Activated CD4-positive, alpha-beta T cell treated with anti-CD3 and anti-CD28 coated beads for 36 hours (primary cell): ENCODE measurements at regions of chr5 and their contacts with region 1.

Region 1: DNA sequence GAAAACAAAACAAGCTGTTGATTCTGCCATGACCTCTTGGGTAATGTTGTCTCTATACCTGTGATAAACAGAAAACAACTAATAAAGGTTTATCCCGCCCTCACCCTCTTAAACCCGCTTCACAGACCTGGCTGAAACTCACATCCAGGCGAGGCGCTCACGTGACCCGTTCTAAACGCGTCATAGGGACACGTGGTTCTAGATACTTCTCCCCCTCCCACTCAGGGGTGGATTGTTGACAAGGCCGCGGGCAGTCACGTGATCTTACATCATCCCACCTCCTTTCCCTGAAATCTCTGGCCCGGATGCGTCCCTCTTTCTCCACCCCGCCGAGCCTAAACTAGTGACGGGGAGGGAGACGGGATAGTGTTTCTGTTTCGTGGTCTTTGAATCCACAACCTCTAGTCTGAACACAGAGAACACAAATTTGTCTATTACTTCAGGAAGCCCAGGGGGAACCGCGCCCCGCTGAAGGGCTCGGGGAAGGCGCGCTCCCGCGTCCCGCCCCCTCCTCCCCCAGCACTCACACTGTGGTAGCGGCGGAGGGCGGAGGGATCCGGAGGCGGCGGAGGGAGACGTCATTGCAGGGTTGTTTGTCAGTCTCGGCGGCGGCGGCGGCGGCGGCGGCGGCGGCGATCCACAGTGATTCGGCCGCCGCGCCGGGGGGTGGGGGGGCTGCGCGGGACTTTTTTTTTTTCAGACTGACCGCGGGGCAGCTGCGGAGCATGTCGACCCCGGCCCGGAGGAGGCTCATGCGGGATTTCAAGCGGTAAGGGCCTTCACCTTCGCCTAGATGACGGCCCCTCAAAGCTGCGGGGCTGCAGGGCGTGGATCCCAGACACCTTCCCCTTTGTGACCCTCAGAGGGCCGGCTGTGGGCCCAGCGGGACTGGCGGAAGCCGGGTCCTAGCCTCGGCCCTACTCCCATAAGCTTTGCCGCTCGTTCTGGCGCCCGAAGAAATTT is at the start of gene UBE2B:
- DNase-seq: peak; percentile 98
- ATAC-seq: peak; percentile 72
- H3K4me3 Mint-ChIP-seq: peak within 1 kb of the TSS; percentile 99
- H3K27ac Mint-ChIP-seq: peak within 1 kb of the TSS; percentile 99
- H3K4me1 Mint-ChIP-seq: peaks cover 53% of the 10 kb centered on the region
- H3K27me3 Mint-ChIP-seq: no peaks in the 10 kb centered on the region
- total RNA-seq, gene UBE2B: 112 to 115 TPM

Region 2: GRCh38 chr5:133051580-133052332 is 1319.4 kb before region 1 on chr5 and contains the start of gene HSPA4:
- CTCF ChIA-PET with region 1: no interaction called
- POLR2A ChIA-PET with region 1: no interaction called
- intact Hi-C with region 1: loop called in 1 of 2 experiments (anchors 2 kb)
- DNase-seq: peak; percentile 99
- ATAC-seq: peak; percentile 89
- H3K4me3 Mint-ChIP-seq: peak within 1 kb of the TSS; percentile 98
- H3K27ac Mint-ChIP-seq: peak within 1 kb of the TSS; percentile 100
- H3K4me1 Mint-ChIP-seq: peaks cover 44% of the 10 kb centered on the region
- H3K27me3 Mint-ChIP-seq: no peaks in the 10 kb centered on the region
- total RNA-seq, gene HSPA4: 243 to 268 TPM

Region 3: GRCh38 chr5:133907075-133907474 is 464.1 kb before region 1 on chr5:
- CTCF ChIA-PET with region 1: no interaction called
- POLR2A ChIA-PET with region 1: no interaction called
- intact Hi-C with region 1: no loop called
- DNase-seq: no peak
- ATAC-seq: no peak
- H3K4me3 Mint-ChIP-seq: no peak overlapping the region
- H3K27ac Mint-ChIP-seq: no peak overlapping the region
- H3K4me1 Mint-ChIP-seq: no peaks in the 10 kb centered on the region
- H3K27me3 Mint-ChIP-seq: no peaks in the 10 kb centered on the region

Region 4: GRCh38 chr5:134176511-134177368 is 194.4 kb before region 1 on chr5 and contains the start of gene SKP1:
- CTCF ChIA-PET with region 1: no interaction called
- POLR2A ChIA-PET with region 1: interaction called, 4 read pairs
- intact Hi-C with region 1: loop called (anchors 1 kb)
- DNase-seq: peak; percentile 91
- ATAC-seq: peak; percentile 85
- H3K4me3 Mint-ChIP-seq: peak within 1 kb of the TSS; percentile 98
- H3K27ac Mint-ChIP-seq: peak within 1 kb of the TSS; percentile 95
- H3K4me1 Mint-ChIP-seq: peaks cover 32% of the 10 kb centered on the region
- H3K27me3 Mint-ChIP-seq: no peaks in the 10 kb centered on the region
- total RNA-seq, gene SKP1: 218 to 265 TPM

Region 5: DNA sequence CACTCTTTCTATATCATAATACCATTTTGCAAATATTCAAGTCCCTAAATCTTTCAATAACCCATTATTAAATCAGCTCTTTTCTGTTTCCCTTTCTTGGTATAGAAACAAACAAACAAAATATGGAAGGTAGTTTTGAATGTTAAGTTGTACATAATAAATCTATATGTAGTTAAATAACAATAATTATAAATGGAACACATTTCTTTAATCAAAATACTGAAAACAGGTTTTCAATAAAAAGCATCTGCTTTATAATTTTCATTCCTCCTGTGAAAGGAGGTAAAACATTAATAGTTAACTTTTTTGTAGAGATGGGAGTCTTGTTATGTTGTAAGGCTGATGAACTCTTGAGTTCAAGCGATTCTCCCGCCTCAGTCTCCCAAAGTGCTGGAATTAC is 58.4 kb before region 1 on chr5:
- CTCF ChIA-PET with region 1: no interaction called
- POLR2A ChIA-PET with region 1: no interaction called
- intact Hi-C with region 1: no loop called
- DNase-seq: no peak
- ATAC-seq: no peak
- H3K4me3 Mint-ChIP-seq: no peak overlapping the region
- H3K27ac Mint-ChIP-seq: no peak overlapping the region
- H3K4me1 Mint-ChIP-seq: no peaks in the 10 kb centered on the region
- H3K27me3 Mint-ChIP-seq: no peaks in the 10 kb centered on the region

Region 6: GRCh38 chr5:134411546-134412266 is 40.6 kb after region 1 on chr5 and contains the start of gene CDKN2AIPNL:
- CTCF ChIA-PET with region 1: interaction called, 13 read pairs
- POLR2A ChIA-PET with region 1: interaction called, 5 read pairs
- intact Hi-C with region 1: loop called (anchors 1 to 2 kb)
- DNase-seq: peak; percentile 95
- ATAC-seq: peak; percentile 100
- H3K4me3 Mint-ChIP-seq: peak within 1 kb of the TSS; percentile 96
- H3K27ac Mint-ChIP-seq: peak within 1 kb of the TSS; percentile 92
- H3K4me1 Mint-ChIP-seq: peaks cover 35% of the 10 kb centered on the region
- H3K27me3 Mint-ChIP-seq: no peaks in the 10 kb centered on the region
- total RNA-seq, gene CDKN2AIPNL: 36.1 to 42.0 TPM

Region 7: GRCh38 chr5:134637161-134637582 is 266.0 kb after region 1 on chr5:
- CTCF ChIA-PET with region 1: no interaction called
- POLR2A ChIA-PET with region 1: no interaction called
- intact Hi-C with region 1: loop called in 1 of 2 experiments (anchors 1 kb)
- DNase-seq: no peak
- ATAC-seq: no peak
- H3K4me3 Mint-ChIP-seq: no peak overlapping the region
- H3K27ac Mint-ChIP-seq: no peak overlapping the region
- H3K4me1 Mint-ChIP-seq: peaks cover 6% of the 10 kb centered on the region
- H3K27me3 Mint-ChIP-seq: no peaks in the 10 kb centered on the region

Region 8: GRCh38 chr5:134758504-134759341 is 387.6 kb after region 1 on chr5 and contains the start of gene DDX46:
- CTCF ChIA-PET with region 1: no interaction called
- POLR2A ChIA-PET with region 1: no interaction called
- intact Hi-C with region 1: loop called in 1 of 2 experiments (anchors 2 kb)
- DNase-seq: peak; percentile 98
- ATAC-seq: peak; percentile 99
- H3K4me3 Mint-ChIP-seq: peak within 1 kb of the TSS; percentile 94
- H3K27ac Mint-ChIP-seq: peak within 1 kb of the TSS; percentile 89
- H3K4me1 Mint-ChIP-seq: peaks cover 29% of the 10 kb centered on the region
- H3K27me3 Mint-ChIP-seq: no peaks in the 10 kb centered on the region
- total RNA-seq, gene DDX46: 63.5 to 86.7 TPM

Region 9: DNA sequence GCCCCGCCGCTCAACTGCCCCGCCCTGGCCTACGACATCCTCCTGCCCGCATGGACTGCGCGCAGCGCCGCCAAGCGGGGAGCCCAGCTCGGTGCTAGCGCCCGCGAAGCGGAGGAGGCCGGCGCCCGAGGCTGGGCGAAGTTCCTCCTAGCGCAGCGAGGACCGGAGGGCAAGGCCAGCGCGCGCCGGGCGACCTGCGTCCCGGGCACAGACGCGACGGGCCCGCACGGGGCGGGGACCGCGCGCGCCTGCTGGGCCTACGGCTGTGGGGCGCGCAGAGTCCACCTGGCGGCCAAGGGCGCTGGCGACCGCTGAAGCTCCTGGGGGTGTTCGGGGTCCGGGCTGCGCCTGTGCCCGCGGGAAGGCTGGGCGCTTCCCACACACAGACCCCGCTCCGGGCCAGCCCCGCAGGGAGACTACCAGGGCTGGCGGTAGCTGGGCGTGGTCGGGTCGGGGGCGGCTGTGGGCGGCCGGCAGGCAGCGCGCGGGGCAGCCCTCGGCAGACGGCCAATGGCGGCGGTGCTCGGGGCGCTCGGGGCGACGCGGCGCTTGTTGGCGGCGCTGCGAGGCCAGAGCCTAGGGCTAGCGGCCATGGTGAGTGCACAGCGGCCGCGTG is 533.6 kb after region 1 on chr5 and contains the start of gene PCBD2:
- CTCF ChIA-PET with region 1: no interaction called
- POLR2A ChIA-PET with region 1: no interaction called
- intact Hi-C with region 1: loop called in 1 of 2 experiments (anchors 1 kb)
- DNase-seq: peak; percentile 97
- ATAC-seq: peak; percentile 89
- H3K4me3 Mint-ChIP-seq: peak within 1 kb of the TSS; percentile 95
- H3K27ac Mint-ChIP-seq: peak within 1 kb of the TSS; percentile 98
- H3K4me1 Mint-ChIP-seq: peaks cover 17% of the 10 kb centered on the region
- H3K27me3 Mint-ChIP-seq: no peaks in the 10 kb centered on the region
- total RNA-seq, gene PCBD2: 10.0 to 12.8 TPM